PC-3 (cell line): ENCODE measurements at regions of chr2 and their contacts with region 1.

Region 1: DNA sequence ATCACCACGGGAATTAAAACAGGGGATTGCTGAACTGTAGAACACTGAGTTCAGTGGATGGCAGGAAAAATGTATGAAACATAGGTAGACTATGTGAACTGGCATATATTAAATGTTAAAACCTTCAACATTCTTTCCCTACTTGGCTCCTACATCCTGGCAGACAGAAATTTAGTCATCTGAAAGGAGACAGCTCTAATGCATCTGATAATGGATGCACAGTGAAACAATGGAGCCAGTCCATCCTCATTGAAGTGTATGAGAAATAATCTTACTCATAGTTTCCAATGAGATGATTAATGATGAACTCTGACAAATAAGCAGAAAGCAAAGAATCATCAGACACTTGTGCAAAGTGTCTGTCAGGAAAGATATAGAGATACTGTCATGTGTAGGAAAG is 1629.7 kb upstream of the TMEFF2 start:
- DNase-seq: peak; percentile 71
- ATAC-seq: peak; percentile 80
- H3K4me3 ChIP-seq: no peak overlapping the region
- H3K27ac ChIP-seq: peak overlapping the region; percentile 69
- H3K4me1 ChIP-seq: peaks cover 6% of the 10 kb centered on the region; the same call in 1 of the 2 replicates
- H3K27me3 ChIP-seq: no peaks in the 10 kb centered on the region
- CTCF ChIP-seq: no peak

Region 2: GRCh38 chr2:193837111-193837737 is 12.8 kb after region 1 on chr2:
- CTCF ChIA-PET with region 1: no interaction called
- POLR2A ChIA-PET with region 1: no interaction called
- intact Hi-C with region 1: loop called (anchors 1 kb)
- DNase-seq: peak; percentile 59
- ATAC-seq: peak; percentile 67
- H3K4me3 ChIP-seq: no peak overlapping the region
- H3K27ac ChIP-seq: peak overlapping the region; percentile 68
- H3K4me1 ChIP-seq: peaks cover 13% of the 10 kb centered on the region; the same call in 1 of the 2 replicates
- H3K27me3 ChIP-seq: no peaks in the 10 kb centered on the region
- CTCF ChIP-seq: no peak